ENCODE measurements at regions of chr17 and their contacts with region 1.

Region 1: DNA sequence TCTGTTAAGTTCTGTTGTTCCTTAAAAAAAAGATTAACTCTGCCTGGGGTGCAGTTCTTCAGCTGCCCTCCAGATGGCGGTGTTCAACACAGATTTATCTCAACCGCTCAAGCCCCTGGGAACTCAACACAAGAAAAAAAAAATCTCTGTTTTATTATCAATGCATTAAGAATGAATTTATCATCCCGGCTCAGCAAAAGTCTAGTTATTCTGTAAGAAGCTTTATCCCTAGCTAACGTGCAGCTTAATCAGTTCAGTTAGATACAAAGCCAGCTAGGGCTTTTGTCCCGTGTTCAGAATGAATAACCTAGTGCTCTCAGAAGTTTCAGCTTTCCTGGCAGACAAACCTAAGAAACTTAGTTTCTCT is 475.9 kb upstream of the CCL2 start:
- DNase-seq: peak; percentile 32
- ATAC-seq: peak in 1 of 2 donors; percentile 30

Region 2: DNA sequence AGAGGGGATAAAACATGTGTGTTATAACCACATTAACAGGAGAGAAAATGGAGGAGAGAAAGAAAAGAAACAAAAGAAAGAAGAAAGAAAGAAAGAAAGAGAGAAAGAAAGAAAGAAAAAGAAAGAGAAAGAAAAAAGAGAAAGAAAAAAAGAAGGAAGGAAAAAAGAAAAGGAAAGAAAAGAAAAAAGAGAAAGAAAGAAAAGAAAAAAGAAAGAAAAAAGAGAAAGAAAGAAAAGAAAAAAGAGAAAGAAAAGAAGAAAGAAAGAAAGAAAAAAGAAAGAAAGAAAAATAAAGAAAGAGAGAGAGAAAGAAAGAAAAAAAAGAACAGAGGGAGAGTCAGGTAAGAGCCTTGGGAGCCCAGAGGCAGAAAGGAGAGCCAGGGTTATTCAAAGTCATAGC is 39.5 kb before region 1 on chr17:
- intact Hi-C with region 1: loop called in 1 of 2 experiments (anchors 5 kb)
- DNase-seq: no peak
- ATAC-seq: no peak

Region 3: GRCh38 chr17:33940769-33941370 is 161.7 kb after region 1 on chr17:
- intact Hi-C with region 1: no loop called
- DNase-seq: peak; percentile 24
- ATAC-seq: peak; percentile 53 to 90

Region 4: DNA sequence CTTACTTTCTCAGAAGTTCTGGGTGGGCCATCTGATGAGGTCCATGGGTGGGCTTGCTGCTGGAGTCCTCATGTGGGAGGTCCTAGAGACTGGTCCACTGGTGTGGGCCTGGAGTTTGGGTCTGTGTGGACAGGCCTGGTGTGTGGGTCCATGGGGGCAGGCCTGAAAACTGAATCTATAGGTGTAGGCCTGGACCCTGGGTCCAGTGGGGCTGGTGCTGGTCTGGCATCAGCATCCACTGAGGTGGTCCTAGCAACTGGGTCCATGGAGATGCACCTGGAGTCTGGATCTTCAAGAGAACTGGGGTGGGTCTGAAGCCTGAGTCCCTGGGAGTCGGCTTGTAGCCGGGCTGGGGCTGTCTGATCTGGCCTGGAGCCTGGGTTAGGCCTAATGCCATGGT is 222.0 kb after region 1 on chr17:
- intact Hi-C with region 1: no loop called
- DNase-seq: no peak
- ATAC-seq: no peak

Region 5: GRCh38 chr17:34146440-34147043 is 367.3 kb after region 1 on chr17:
- intact Hi-C with region 1: loop called in 1 of 2 experiments (anchors 5 kb)
- DNase-seq: peak; percentile 42
- ATAC-seq: peak in 1 of 2 donors; percentile 42

Region 6: DNA sequence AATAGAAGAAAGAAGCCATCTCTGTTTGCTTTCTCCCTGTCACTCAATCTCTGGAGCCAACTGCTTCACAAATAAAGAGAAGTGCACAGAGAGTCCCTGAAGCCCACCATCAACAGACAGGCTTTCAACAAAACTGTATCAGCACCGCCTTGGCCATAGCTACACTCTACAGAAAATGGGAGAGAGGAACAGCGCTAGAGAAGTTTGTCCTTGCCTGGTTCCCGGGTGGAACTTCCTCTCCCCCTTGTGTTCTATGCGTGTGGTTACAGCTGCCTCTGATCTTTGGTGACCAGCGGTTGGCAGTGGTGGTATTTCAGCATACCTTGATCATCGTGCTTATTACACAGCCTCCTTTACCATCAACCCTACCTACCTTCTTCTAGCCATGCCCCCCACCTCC is 384.4 kb after region 1 on chr17:
- intact Hi-C with region 1: loop called in 1 of 2 experiments (anchors 5 kb)
- DNase-seq: no peak
- ATAC-seq: peak in 1 of 2 donors; percentile 42